Activated CD4-positive, alpha-beta memory T cell treated with anti-CD3 and anti-CD28 coated beads for 36 hours (primary cell): ENCODE measurements at regions of chr12 and their contacts with region 1.

Region 1: DNA sequence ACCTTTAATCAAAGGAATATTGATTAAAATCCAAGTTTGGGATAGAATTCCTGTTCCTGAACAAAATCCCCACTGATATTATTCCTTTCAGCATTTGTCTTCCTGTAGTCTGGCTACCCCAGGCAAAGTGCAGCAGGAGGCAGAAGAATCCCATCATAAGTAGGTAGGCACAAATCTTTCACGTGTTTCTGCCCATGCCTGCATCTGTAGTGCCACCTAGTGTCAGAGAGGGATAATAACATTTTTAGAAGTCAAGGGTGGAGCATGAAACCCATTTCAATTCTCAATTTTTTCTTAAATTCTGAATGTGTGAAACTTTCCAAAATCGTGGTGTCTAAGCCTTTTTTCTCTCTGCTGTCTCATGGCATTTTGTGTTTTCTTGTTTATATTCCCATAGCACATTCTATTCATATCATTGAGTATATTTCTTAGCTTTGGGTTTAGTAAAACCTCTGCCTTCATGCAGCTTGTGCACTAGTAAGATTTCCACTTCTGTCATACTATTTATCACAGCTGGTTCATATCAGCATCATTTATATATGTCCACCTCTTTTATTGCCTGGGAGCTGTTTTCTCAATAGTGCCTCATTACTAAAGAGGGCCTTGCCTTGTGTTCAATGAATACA is 47.8 kb upstream of the RERG start:
- DNase-seq: peak; percentile 45
- H3K4me3 Mint-ChIP-seq: no peak overlapping the region
- H3K27ac Mint-ChIP-seq: no peak overlapping the region
- H3K4me1 Mint-ChIP-seq: no peaks in the 10 kb centered on the region
- H3K27me3 Mint-ChIP-seq: peaks cover 2% of the 10 kb centered on the region

Region 2: DNA sequence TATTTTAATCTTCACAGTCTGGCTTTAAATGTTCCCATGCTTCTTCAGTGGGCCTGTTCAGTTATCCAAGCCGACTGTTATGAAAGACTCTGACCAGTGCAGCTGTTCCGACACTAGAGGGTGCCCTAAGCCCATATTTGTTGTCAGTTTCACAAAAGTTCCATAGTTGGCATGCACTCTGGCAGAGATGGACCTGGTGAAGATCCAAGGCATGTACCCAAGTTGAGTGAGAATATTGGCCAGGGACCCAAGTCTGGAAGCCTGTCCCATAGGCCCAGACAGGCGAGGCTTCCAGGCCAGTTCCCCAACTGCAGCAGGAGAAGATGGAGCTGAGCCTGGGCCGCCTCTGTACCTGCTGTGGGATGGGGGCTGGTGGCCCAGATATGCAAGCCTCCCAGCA is 545.3 kb before region 1 on chr12:
- CTCF ChIA-PET with region 1: interaction called, 5 read pairs
- POLR2A ChIA-PET with region 1: no interaction called
- intact Hi-C with region 1: loop called (anchors 5 kb)
- DNase-seq: peak; percentile 65
- H3K4me3 Mint-ChIP-seq: no peak overlapping the region
- H3K27ac Mint-ChIP-seq: no peak overlapping the region
- H3K4me1 Mint-ChIP-seq: no peaks in the 10 kb centered on the region
- H3K27me3 Mint-ChIP-seq: peaks cover 2% of the 10 kb centered on the region

Region 3: DNA sequence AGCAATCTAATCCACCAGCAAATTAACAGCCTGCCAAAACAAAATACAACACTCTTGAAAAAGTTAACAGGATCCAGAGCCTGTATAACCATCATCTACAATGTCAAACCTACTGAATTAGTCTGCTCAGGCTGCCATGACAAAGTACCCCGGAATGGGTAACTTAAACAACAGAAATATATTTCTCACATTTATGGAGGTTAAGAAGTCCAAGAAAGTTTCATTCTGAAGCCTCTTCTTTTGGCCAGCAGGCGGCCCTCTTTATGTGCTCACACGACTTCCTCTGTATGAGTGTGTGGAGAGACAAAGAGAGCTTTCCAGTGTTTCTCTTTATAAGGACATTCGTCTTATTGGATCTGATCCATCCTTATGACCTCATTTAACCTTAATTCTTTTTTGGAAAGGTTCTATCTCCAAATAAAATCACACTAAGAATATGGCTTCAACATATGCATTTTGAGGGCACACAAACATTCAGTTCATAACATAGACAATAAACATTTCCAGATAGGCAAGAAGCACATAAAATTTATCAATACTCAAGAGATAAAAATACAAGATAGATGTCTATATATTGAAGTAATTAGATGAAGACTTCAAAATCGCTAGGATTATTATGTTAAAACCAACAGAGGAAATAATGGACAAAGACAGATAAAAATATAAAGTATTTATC is 41.9 kb before region 1 on chr12:
- CTCF ChIA-PET with region 1: interaction called, 15 read pairs
- POLR2A ChIA-PET with region 1: no interaction called
- intact Hi-C with region 1: loop called (anchors 1 kb)
- DNase-seq: peak; percentile 43
- H3K4me3 Mint-ChIP-seq: no peak overlapping the region
- H3K27ac Mint-ChIP-seq: no peak overlapping the region
- H3K4me1 Mint-ChIP-seq: no peaks in the 10 kb centered on the region
- H3K27me3 Mint-ChIP-seq: peaks cover 27% of the 10 kb centered on the region